ENCODE measurements at regions of chr1 and their contacts with region 1.

Region 1: GRCh38 chr1:162497723-162498500 is at the start of gene UHMK1:
- DNase-seq: peak; percentile 82 to 98 (median 90)

Region 2: DNA sequence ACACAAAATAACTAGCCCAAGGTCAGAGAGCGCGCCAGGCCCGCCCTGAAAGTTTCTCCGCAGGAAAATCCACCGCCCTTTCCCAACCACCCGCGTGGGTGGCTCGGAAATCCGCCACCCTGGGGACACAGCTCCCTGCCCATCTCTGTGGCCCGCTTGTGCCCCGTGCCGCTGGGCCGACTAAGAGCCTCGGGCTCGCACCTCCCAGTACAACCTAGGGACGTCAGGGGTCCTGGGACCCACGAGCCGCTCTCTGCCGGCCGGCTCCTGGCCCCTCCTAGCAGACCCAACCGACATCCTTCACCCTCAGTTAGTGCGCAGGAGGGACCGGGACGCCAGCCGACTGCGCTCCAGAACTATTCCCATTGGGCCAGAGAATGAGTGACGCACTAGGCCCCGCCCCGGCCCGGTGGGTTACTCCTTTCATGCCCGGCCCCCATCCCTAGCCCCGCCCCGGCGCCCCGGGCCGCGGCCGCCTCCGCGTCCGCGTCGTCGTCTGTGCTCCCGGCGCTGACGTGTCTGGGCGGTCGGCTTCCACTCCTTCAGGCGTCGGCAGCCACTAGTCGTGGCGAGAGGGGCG is 63.2 kb after region 1 on chr1:
- intact Hi-C with region 1: loop called (anchors 5 kb)
- DNase-seq: peak; percentile 95 to 100 (median 98)

Measured in posterior cingulate gyrus (tissue), 11 donors.